GM12878 (cell line): ENCODE measurements at regions of chrX and their contacts with region 1.

Region 1: GRCh38 chrX:48696301-48697181 is at the start of gene SUV39H1:
- DNase-seq: peak; percentile 45
- ATAC-seq: peak; percentile 98
- H3K4me3 ChIP-seq: peak within 1 kb of the TSS; percentile 58
- H3K27ac ChIP-seq: peak within 1 kb of the TSS; percentile 77
- H3K4me1 ChIP-seq: peaks cover 6% of the 10 kb centered on the region
- H3K27me3 ChIP-seq: no peaks in the 10 kb centered on the region
- CTCF ChIP-seq: no peak
- EP300 ChIP-seq: no peak
- POLR2A ChIP-seq: peak; percentile 89
- RAD21 ChIP-seq: no peak
- polyA plus RNA-seq, gene SUV39H1: 4.9 to 5.7 TPM

Region 2: DNA sequence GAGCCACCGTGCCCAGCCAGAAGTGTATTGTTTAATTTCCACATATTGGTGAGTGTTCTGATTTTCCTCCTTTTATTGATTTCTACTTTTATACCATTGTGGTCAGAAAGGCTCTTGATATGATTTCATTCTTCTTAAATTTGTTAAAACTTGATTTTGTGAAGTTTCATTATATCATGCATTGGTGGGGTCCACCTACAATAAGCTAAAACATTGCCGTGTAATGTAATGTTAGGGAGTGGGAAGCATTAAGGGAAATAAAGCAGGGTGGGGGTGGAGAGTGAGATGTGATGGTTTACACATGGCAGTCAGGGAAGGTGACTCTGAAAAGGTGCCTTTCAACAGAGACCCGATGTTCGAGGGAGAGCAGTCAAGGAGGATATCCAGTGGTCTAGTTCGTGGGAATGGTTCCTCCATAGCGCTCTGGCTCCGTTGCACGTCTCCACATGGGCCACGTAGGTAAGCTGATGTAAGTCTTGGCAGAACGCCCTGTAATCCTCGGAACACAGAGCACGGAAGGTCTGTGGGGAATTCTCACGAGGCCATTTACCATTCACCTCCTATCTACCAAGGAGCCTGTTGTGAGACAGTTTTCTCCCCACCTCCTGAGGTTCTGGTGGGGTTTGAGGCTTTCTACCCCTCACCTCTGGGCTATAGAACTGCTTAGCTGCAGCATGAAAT is 106.9 kb before region 1 on chrX:
- CTCF ChIA-PET with region 1: no interaction called
- POLR2A ChIA-PET with region 1: no interaction called
- RAD21 ChIA-PET with region 1: no interaction called
- SMC1A ChIA-PET with region 1: no interaction called
- in situ Hi-C with region 1: no loop called
- intact Hi-C with region 1: no loop called
- DNase-seq: no peak
- ATAC-seq: no peak
- H3K4me3 ChIP-seq: no peak overlapping the region
- H3K27ac ChIP-seq: no peak overlapping the region
- H3K4me1 ChIP-seq: no peaks in the 10 kb centered on the region
- H3K27me3 ChIP-seq: no peaks in the 10 kb centered on the region
- CTCF ChIP-seq: no peak
- EP300 ChIP-seq: no peak
- POLR2A ChIP-seq: no peak
- RAD21 ChIP-seq: no peak

Region 3: GRCh38 chrX:48676106-48676892 is 20.2 kb before region 1 on chrX:
- CTCF ChIA-PET with region 1: no interaction called
- POLR2A ChIA-PET with region 1: interaction called, 9 read pairs
- RAD21 ChIA-PET with region 1: no interaction called
- SMC1A ChIA-PET with region 1: interaction called, 3 read pairs
- in situ Hi-C with region 1: no loop called
- intact Hi-C with region 1: loop called (anchors 2 kb)
- DNase-seq: peak; percentile 61
- ATAC-seq: peak; percentile 97
- H3K4me3 ChIP-seq: peak overlapping the region; percentile 76
- H3K27ac ChIP-seq: peak overlapping the region; percentile 75
- H3K4me1 ChIP-seq: no peaks in the 10 kb centered on the region; the same call in 1 of the 2 replicates
- H3K27me3 ChIP-seq: no peaks in the 10 kb centered on the region
- CTCF ChIP-seq: no peak
- EP300 ChIP-seq: no peak
- POLR2A ChIP-seq: peak; percentile 82
- RAD21 ChIP-seq: no peak

Region 4: GRCh38 chrX:48786341-48786800 is 89.8 kb after region 1 on chrX and contains the start of gene GATA1:
- CTCF ChIA-PET with region 1: no interaction called
- POLR2A ChIA-PET with region 1: no interaction called
- RAD21 ChIA-PET with region 1: no interaction called
- SMC1A ChIA-PET with region 1: no interaction called
- in situ Hi-C with region 1: no loop called
- intact Hi-C with region 1: no loop called
- DNase-seq: no peak
- ATAC-seq: no peak
- H3K4me3 ChIP-seq: no peak within 1 kb of the TSS
- H3K27ac ChIP-seq: no peak within 1 kb of the TSS
- H3K4me1 ChIP-seq: no peaks in the 10 kb centered on the region
- H3K27me3 ChIP-seq: no peaks in the 10 kb centered on the region
- CTCF ChIP-seq: no peak
- EP300 ChIP-seq: no peak
- POLR2A ChIP-seq: no peak
- RAD21 ChIP-seq: no peak
- polyA plus RNA-seq, gene GATA1: not detected

Region 5: GRCh38 chrX:48801280-48802088 is 104.9 kb after region 1 on chrX and contains the start of gene HDAC6:
- CTCF ChIA-PET with region 1: no interaction called
- POLR2A ChIA-PET with region 1: no interaction called
- RAD21 ChIA-PET with region 1: no interaction called
- SMC1A ChIA-PET with region 1: no interaction called
- in situ Hi-C with region 1: no loop called
- intact Hi-C with region 1: loop called (anchors 5 kb)
- DNase-seq: peak; percentile 94
- ATAC-seq: peak; percentile 90
- H3K4me3 ChIP-seq: peak within 1 kb of the TSS; percentile 69
- H3K27ac ChIP-seq: peak within 1 kb of the TSS; percentile 94
- H3K4me1 ChIP-seq: no peaks in the 10 kb centered on the region
- H3K27me3 ChIP-seq: no peaks in the 10 kb centered on the region
- CTCF ChIP-seq: no peak
- EP300 ChIP-seq: no peak
- POLR2A ChIP-seq: peak; percentile 75
- RAD21 ChIP-seq: no peak
- polyA plus RNA-seq, gene HDAC6: 8.3 to 17.5 TPM